A673 (cell line): ENCODE measurements at regions of chr7 and their contacts with region 1.

Region 1: GRCh38 chr7:32846701-32847100 is 44.9 kb downstream of the KBTBD2 start:
- DNase-seq: peak; percentile 93
- H3K4me3 ChIP-seq: no peak overlapping the region
- H3K27ac ChIP-seq: no peak overlapping the region
- H3K4me1 ChIP-seq: peaks cover 6% of the 10 kb centered on the region
- H3K27me3 ChIP-seq: no peaks in the 10 kb centered on the region
- CTCF ChIP-seq: peak; percentile 93

Region 2: GRCh38 chr7:32942786-32943653 is 96.3 kb after region 1 on chr7:
- CTCF ChIA-PET with region 1: interaction called, 5 read pairs
- POLR2A ChIA-PET with region 1: no interaction called
- intact Hi-C with region 1: loop called (anchors 2 kb)
- DNase-seq: peak; percentile 92
- H3K4me3 ChIP-seq: peak overlapping the region; percentile 86
- H3K27ac ChIP-seq: peak overlapping the region; percentile 91
- H3K4me1 ChIP-seq: peaks cover 7% of the 10 kb centered on the region
- H3K27me3 ChIP-seq: no peaks in the 10 kb centered on the region
- CTCF ChIP-seq: peak; percentile 60

Region 3: GRCh38 chr7:33050535-33051318 is 204.0 kb after region 1 on chr7:
- CTCF ChIA-PET with region 1: no interaction called
- POLR2A ChIA-PET with region 1: no interaction called
- intact Hi-C with region 1: loop called (anchors 5 kb)
- DNase-seq: peak; percentile 76
- H3K4me3 ChIP-seq: no peak overlapping the region
- H3K27ac ChIP-seq: peak overlapping the region; percentile 3
- H3K4me1 ChIP-seq: peaks cover 20% of the 10 kb centered on the region
- H3K27me3 ChIP-seq: no peaks in the 10 kb centered on the region
- CTCF ChIP-seq: peak; percentile 78

Region 4: DNA sequence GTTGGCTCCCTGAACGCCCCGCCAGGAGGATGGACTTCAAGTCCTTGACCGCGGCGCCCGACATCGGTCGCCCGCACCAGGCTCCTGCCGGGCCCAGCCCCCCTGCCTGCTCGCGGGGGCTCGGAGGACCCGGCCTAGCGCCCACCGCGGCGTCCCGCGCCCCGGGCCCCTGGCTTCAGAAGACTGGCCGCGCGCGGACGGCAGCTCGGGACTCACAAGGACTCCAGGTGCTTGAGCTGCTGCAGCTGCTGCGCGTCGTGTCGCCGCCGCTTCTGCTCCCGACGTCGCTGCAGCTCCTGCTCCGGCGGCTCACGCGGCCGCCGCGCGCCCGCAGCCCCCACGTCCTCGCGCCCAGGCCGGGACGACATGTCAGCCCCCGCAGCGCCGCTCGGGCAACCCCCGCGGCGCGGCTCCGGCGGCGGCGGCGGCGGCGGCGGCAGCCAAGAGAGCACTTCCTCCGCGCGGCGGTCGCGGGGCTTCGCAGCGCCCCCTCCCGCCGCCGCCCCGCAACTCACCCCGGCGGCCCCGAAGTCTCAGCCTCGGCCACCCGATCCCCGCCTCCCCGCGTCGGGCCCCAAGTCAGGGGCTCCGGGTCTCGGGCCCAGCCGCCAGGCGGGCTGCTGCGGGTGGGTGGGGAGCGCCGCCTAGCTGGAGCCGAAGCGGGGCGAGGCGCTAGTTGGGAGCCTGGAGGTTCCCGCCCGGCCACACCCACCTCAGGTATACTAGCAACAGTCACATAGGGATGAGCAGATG is 262.5 kb after region 1 on chr7 and contains the start of gene RP9:
- CTCF ChIA-PET with region 1: interaction called, 5 read pairs
- POLR2A ChIA-PET with region 1: no interaction called
- intact Hi-C with region 1: loop called (anchors 2 kb)
- DNase-seq: peak; percentile 89
- H3K4me3 ChIP-seq: peak within 1 kb of the TSS; percentile 95
- H3K27ac ChIP-seq: peak within 1 kb of the TSS; percentile 86
- H3K4me1 ChIP-seq: peaks cover 8% of the 10 kb centered on the region
- H3K27me3 ChIP-seq: no peaks in the 10 kb centered on the region
- CTCF ChIP-seq: peak; percentile 60
- total RNA-seq, gene RP9: 29.3 and 29.5 TPM in 2 replicates

Region 5: GRCh38 chr7:33392148-33392547 is 545.4 kb after region 1 on chr7:
- CTCF ChIA-PET with region 1: no interaction called
- POLR2A ChIA-PET with region 1: no interaction called
- intact Hi-C with region 1: no loop called
- DNase-seq: no peak
- H3K4me3 ChIP-seq: no peak overlapping the region
- H3K27ac ChIP-seq: no peak overlapping the region
- H3K4me1 ChIP-seq: no peaks in the 10 kb centered on the region
- H3K27me3 ChIP-seq: no peaks in the 10 kb centered on the region
- CTCF ChIP-seq: no peak